ENCODE measurements at regions of chr10 and their contacts with region 1.

Region 1: GRCh38 chr10:124447741-124448466 is 1.9 kb downstream of the NKX1-2 start:
- DNase-seq: no peak
- ATAC-seq: no peak
- H3K4me3 ChIP-seq: peak overlapping the region; percentile 56
- H3K27ac ChIP-seq: no peak overlapping the region
- H3K4me1 ChIP-seq: peaks cover 12% of the 10 kb centered on the region
- H3K27me3 ChIP-seq: peaks cover 8 to 92% (median 26%) of the 10 kb centered on the region in 3 donors
- CTCF ChIP-seq: no peak

Region 2: DNA sequence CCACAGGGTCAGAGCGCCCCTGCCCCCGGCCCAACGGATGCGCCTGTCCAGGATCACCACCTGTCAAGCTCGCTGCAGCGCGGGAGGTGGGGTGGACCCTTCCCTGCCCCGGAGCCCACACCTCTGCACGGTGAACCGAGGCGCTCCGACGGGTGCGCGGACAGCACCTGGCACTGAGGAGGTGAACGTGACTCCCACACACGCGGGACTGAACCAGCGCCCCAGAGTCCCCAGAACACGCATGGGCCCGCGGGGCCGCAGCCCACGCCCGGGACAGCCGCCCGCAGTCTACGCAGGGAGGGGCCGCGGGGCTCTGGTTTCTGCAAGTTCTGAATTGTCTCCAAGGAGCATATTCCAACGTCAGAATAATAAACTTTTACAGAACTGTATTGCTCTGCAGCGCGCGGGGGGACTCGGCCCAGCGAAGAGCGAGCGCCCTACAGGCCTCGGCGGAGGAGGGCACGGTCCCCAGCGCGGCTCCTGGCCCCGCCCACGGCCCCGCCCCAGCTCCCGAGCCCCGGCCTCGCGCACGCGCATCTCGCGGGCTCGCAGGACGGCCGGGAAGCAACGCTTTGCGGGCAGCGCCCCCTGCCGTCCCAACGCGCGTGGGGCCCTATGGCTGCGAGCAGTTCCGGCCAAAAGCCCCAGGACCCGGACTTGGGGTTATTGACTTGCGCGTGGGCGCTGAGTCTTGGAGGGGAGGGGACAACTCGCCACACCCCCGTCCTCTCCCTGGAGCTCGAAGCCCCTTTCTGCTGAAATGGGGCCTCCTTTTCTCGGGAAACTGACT is 58.9 kb before region 1 on chr10:
- intact Hi-C with region 1: no loop called
- DNase-seq: peak; percentile 91 to 95
- ATAC-seq: peak; percentile 98 to 100 (median 100)
- H3K4me3 ChIP-seq: peak overlapping the region; percentile 72
- H3K27ac ChIP-seq: no peak overlapping the region
- H3K4me1 ChIP-seq: no peaks in the 10 kb centered on the region
- H3K27me3 ChIP-seq: no peaks in the 10 kb centered on the region
- CTCF ChIP-seq: peak; percentile 94

Region 3: GRCh38 chr10:124612611-124613498 is 165.0 kb after region 1 on chr10:
- intact Hi-C with region 1: no loop called
- DNase-seq: peak; percentile 47 to 75
- ATAC-seq: peak; percentile 29 to 54 (median 36)
- H3K4me3 ChIP-seq: no peak overlapping the region
- H3K27ac ChIP-seq: no peak overlapping the region
- H3K4me1 ChIP-seq: no peaks in the 10 kb centered on the region
- H3K27me3 ChIP-seq: no peaks in the 10 kb centered on the region
- CTCF ChIP-seq: no peak

Region 4: DNA sequence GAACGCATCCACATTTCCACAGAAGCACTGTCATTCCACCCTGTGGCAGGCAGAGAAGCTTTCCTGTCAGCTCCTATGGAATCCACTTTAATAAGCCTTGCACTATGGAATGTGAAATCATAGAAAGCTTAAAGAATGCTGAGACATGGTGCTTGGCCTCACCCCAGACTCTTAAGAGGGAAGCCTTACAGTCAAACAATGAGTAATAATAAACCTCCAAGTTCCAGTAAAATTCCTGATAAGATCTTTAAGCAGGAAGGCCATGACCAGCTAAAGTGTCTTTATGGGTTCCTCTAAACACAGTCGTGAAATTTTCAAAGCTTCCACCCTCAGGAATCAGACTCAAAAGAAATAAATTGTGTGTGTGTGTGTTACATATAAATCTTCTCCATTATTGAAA is 1247.0 kb after region 1 on chr10:
- intact Hi-C with region 1: loop called in 1 of 2 experiments (anchors 10 kb)
- DNase-seq: no peak
- ATAC-seq: no peak
- H3K4me3 ChIP-seq: no peak overlapping the region
- H3K27ac ChIP-seq: no peak overlapping the region
- H3K4me1 ChIP-seq: no peaks in the 10 kb centered on the region
- H3K27me3 ChIP-seq: peaks cover 0 to 2% (median 0%) of the 10 kb centered on the region in 3 donors
- CTCF ChIP-seq: no peak